ENCODE measurements at regions of chr3 and their contacts with region 1.

Region 1: DNA sequence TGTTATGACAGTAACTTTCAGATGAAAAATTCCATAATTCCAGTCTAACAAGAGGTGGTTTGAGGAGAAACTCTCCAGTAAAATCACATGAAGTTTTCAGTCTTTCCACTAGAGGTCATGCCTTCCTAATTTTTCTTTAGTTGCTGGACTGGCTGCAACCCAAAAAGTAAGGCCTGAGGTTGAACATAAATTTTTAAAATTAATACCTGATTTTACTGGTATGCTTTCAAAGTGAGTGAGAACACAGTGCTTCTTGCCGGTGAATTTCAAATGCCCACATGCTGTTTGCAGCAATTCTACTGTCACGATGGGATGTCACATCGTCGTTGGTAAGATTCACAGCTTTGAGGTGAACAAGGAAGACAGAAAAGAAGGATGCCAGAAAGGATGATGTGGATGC is 89.0 kb upstream of the FGF12 start:
- DNase-seq: no peak
- ATAC-seq: 0 out of 3 replicates have a peak, but pooled peaks have one; percentile 7
- H3K4me3 ChIP-seq: no peak overlapping the region
- H3K27ac ChIP-seq: no peak overlapping the region
- H3K4me1 ChIP-seq: peaks cover 30% of the 10 kb centered on the region
- H3K27me3 ChIP-seq: no peaks in the 10 kb centered on the region
- CTCF ChIP-seq: peak; percentile 48 to 75 (median 61); a peak in 5 of 6 replicates
- EP300 ChIP-seq: no peak
- POLR2A ChIP-seq: no peak
- RAD21 ChIP-seq: peak; percentile 94

Region 2: GRCh38 chr3:192545333-192545732 is 271.0 kb before region 1 on chr3:
- CTCF ChIA-PET with region 1: no interaction called
- POLR2A ChIA-PET with region 1: no interaction called
- RAD21 ChIA-PET with region 1: no interaction called
- SMC1A ChIA-PET with region 1: no interaction called
- in situ Hi-C with region 1: no loop called
- intact Hi-C with region 1: no loop called
- DNase-seq: no peak
- ATAC-seq: no peak
- H3K4me3 ChIP-seq: no peak overlapping the region
- H3K27ac ChIP-seq: no peak overlapping the region
- H3K4me1 ChIP-seq: no peaks in the 10 kb centered on the region
- H3K27me3 ChIP-seq: no peaks in the 10 kb centered on the region
- CTCF ChIP-seq: no peak
- EP300 ChIP-seq: no peak
- POLR2A ChIP-seq: no peak
- RAD21 ChIP-seq: no peak

Region 3: GRCh38 chr3:192687488-192688152 is 128.7 kb before region 1 on chr3:
- CTCF ChIA-PET with region 1: no interaction called
- POLR2A ChIA-PET with region 1: no interaction called
- RAD21 ChIA-PET with region 1: no interaction called
- SMC1A ChIA-PET with region 1: no interaction called
- in situ Hi-C with region 1: no loop called
- intact Hi-C with region 1: no loop called
- DNase-seq: no peak
- ATAC-seq: no peak
- H3K4me3 ChIP-seq: no peak overlapping the region
- H3K27ac ChIP-seq: no peak overlapping the region
- H3K4me1 ChIP-seq: no peaks in the 10 kb centered on the region
- H3K27me3 ChIP-seq: no peaks in the 10 kb centered on the region
- CTCF ChIP-seq: no peak
- EP300 ChIP-seq: no peak
- POLR2A ChIP-seq: no peak
- RAD21 ChIP-seq: no peak

Region 4: GRCh38 chr3:192844836-192845525 is 28.6 kb after region 1 on chr3:
- CTCF ChIA-PET with region 1: interaction called, 13 read pairs
- POLR2A ChIA-PET with region 1: interaction called, 8 read pairs
- RAD21 ChIA-PET with region 1: interaction called, 83 read pairs
- SMC1A ChIA-PET with region 1: interaction called, 82 read pairs
- in situ Hi-C with region 1: no loop called
- intact Hi-C with region 1: loop called (anchors 5 kb)
- DNase-seq: no peak
- ATAC-seq: no peak
- H3K4me3 ChIP-seq: no peak overlapping the region
- H3K27ac ChIP-seq: peak overlapping the region; percentile 61
- H3K4me1 ChIP-seq: peaks cover 51% of the 10 kb centered on the region
- H3K27me3 ChIP-seq: no peaks in the 10 kb centered on the region
- CTCF ChIP-seq: no peak
- EP300 ChIP-seq: no peak
- POLR2A ChIP-seq: no peak
- RAD21 ChIP-seq: no peak

Region 5: DNA sequence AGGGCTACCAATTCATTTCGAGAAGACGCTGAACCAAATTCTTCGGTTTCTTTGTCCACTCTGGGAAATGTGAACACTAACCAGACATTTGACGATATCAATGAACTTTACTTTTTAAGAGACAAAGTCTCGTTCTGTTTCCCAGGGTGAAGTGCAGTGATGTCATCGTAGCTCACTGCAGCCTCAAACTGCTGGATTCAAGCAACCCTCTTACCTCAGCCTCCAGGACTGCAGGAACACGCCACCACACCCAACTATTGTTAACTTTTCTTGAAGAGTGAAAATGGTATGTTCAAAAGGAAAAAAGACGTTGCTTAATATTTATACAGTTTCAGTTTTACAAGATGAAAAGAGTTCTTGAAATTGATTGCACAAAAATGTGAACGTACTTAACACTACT is 70.7 kb after region 1 on chr3:
- CTCF ChIA-PET with region 1: interaction called, 24 read pairs
- POLR2A ChIA-PET with region 1: interaction called, 4 read pairs
- RAD21 ChIA-PET with region 1: interaction called, 80 read pairs
- SMC1A ChIA-PET with region 1: interaction called, 179 read pairs
- in situ Hi-C with region 1: no loop called
- intact Hi-C with region 1: no loop called
- DNase-seq: no peak
- ATAC-seq: no peak; the same call in 2 of the 3 replicates
- H3K4me3 ChIP-seq: no peak overlapping the region
- H3K27ac ChIP-seq: no peak overlapping the region
- H3K4me1 ChIP-seq: peaks cover 21% of the 10 kb centered on the region
- H3K27me3 ChIP-seq: no peaks in the 10 kb centered on the region
- CTCF ChIP-seq: no peak
- EP300 ChIP-seq: no peak
- POLR2A ChIP-seq: no peak
- RAD21 ChIP-seq: no peak

Region 6: DNA sequence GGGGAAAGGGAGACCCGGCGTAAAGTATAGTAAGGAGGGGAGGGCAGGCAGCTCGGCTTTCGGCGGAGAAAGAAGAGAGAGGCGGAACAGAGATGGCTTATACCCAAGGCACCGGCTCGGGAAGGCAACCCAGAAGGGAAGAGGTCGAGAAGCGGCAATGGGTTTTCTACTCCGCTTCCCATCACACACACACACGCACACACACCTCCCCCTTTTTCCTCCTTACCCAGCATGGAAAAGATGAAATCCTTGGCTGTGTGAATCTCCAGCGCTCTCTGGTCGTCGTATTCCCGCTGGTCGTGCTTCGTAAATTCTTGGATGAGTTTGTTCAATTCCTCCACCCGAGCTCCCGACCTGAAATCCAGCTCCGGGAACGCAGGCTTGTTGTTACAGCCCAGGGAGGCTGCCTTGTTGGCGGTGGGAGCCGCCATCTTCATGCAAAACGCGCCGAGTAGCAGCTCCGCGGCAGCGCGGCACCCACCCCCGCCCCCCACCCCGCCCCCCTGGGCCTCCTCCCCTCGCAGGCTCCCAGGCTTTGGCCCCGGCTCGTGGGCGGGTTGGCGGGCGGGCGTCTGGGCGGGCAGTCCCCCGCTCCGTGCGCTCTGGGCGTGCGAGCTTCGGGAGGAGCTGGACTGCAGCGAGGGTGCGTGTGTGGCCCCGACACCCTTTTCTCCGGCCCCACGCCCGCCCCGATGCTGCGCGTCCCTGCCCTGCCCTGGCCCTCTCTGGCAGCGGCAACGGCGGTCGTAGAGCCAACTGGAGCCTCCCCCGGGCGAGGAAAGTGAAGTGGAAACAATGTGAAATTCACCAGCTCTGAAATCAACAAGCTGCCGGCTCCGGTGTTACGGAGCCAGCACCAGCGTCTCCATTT is 101.3 kb after region 1 on chr3 and contains the start of gene MB21D2:
- CTCF ChIA-PET with region 1: interaction called, 440 read pairs
- POLR2A ChIA-PET with region 1: interaction called, 58 read pairs
- RAD21 ChIA-PET with region 1: interaction called, 425 read pairs
- SMC1A ChIA-PET with region 1: interaction called, 472 read pairs
- in situ Hi-C with region 1: loop called (anchors 5 kb)
- intact Hi-C with region 1: loop called (anchors 1 kb)
- DNase-seq: no peak
- ATAC-seq: peak; percentile 77
- H3K4me3 ChIP-seq: peak within 1 kb of the TSS; percentile 85
- H3K27ac ChIP-seq: peak within 1 kb of the TSS; percentile 73
- H3K4me1 ChIP-seq: no peaks in the 10 kb centered on the region
- H3K27me3 ChIP-seq: no peaks in the 10 kb centered on the region
- CTCF ChIP-seq: 0 out of 6 replicates have a peak, but pooled peaks of 1 of the 3 experiments have one; percentile 0
- EP300 ChIP-seq: no peak
- POLR2A ChIP-seq: peak; percentile 83
- RAD21 ChIP-seq: 0 out of 2 replicates have a peak, but pooled peaks have one; percentile 18
- polyA plus RNA-seq, gene MB21D2: 7.9 to 21.2 TPM

Region 7: DNA sequence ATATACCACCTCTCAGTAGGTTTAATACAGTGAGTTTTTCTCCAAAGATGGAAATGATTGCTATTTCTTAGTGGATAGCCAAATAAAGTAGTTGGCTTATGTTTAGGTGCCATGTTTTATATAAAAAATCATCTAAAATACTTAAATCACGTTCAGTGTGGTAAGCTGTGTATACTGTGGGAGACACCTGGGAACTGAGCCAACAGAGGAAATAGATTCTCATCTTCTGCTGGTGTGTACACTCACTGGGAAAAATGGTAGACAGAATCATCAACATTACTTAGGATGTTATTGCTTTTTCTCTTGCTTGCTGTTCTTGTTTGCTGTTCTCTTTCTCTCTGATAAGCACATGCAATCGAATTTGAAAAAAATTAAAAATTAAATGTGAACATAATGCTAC is 213.9 kb after region 1 on chr3:
- CTCF ChIA-PET with region 1: interaction called, 10 read pairs
- POLR2A ChIA-PET with region 1: no interaction called
- RAD21 ChIA-PET with region 1: interaction called, 5 read pairs
- SMC1A ChIA-PET with region 1: interaction called, 6 read pairs
- in situ Hi-C with region 1: no loop called
- intact Hi-C with region 1: no loop called
- DNase-seq: no peak
- ATAC-seq: no peak
- H3K4me3 ChIP-seq: no peak overlapping the region
- H3K27ac ChIP-seq: no peak overlapping the region
- H3K4me1 ChIP-seq: no peaks in the 10 kb centered on the region
- H3K27me3 ChIP-seq: no peaks in the 10 kb centered on the region
- CTCF ChIP-seq: no peak
- EP300 ChIP-seq: no peak
- POLR2A ChIP-seq: no peak
- RAD21 ChIP-seq: no peak

Region 8: DNA sequence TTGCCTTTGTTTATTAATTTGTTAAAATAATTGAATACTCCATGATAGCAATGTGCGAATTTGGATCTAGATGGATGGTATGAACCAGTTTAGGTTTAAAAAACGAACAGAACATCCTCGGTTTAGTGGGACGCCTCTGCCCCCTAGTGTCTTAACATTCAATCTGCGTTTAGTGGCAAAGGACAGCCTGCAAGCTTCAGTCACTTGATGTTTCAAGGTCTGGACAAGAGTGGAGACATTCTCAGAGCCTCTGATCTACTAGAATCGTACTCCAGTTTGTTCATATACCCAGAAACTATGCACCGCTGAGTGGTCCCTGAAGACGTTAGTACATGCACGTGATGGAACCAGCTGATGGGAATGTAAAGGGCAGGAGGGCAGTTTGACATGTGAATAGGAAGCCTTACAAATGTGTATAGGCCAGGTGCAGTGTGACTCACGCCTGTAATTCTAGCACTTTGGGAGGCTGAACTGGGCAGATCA is 756.1 kb after region 1 on chr3:
- CTCF ChIA-PET with region 1: interaction called, 8 read pairs
- POLR2A ChIA-PET with region 1: no interaction called
- RAD21 ChIA-PET with region 1: interaction called, 4 read pairs
- SMC1A ChIA-PET with region 1: interaction called, 5 read pairs
- in situ Hi-C with region 1: loop called (anchors 5 kb)
- intact Hi-C with region 1: loop called (anchors 5 kb)
- DNase-seq: no peak
- ATAC-seq: peak; percentile 91
- H3K4me3 ChIP-seq: no peak overlapping the region
- H3K27ac ChIP-seq: no peak overlapping the region
- H3K4me1 ChIP-seq: no peaks in the 10 kb centered on the region
- H3K27me3 ChIP-seq: no peaks in the 10 kb centered on the region
- CTCF ChIP-seq: peak; percentile 64 to 88 (median 79)
- EP300 ChIP-seq: no peak
- POLR2A ChIP-seq: no peak
- RAD21 ChIP-seq: peak; percentile 91